Mammary epithelial cell (primary cell): ENCODE measurements at regions of chr10 and their contacts with region 1.

Region 1: GRCh38 chr10:129971381-129972144 is 7.5 kb upstream of the EBF3 start:
- DNase-seq: no peak
- H3K4me3 ChIP-seq: no peak overlapping the region
- H3K27ac ChIP-seq: no peak overlapping the region
- H3K4me1 ChIP-seq: no peaks in the 10 kb centered on the region
- H3K27me3 ChIP-seq: peaks cover 39% of the 10 kb centered on the region
- CTCF ChIP-seq: peak in 1 of 2 donors; percentile 37

Region 2: GRCh38 chr10:128211953-128212727 is 1759.4 kb before region 1 on chr10:
- CTCF ChIA-PET with region 1: no interaction called
- dilution Hi-C with region 1: no loop called
- in situ Hi-C with region 1: no loop called
- intact Hi-C with region 1: loop called (anchors 5 kb)
- DNase-seq: peak; percentile 60
- H3K4me3 ChIP-seq: no peak overlapping the region
- H3K27ac ChIP-seq: no peak overlapping the region
- H3K4me1 ChIP-seq: no peaks in the 10 kb centered on the region
- H3K27me3 ChIP-seq: no peaks in the 10 kb centered on the region
- CTCF ChIP-seq: peak; percentile 70 to 95

Region 3: GRCh38 chr10:129030996-129031843 is 940.3 kb before region 1 on chr10:
- CTCF ChIA-PET with region 1: no interaction called
- dilution Hi-C with region 1: no loop called
- in situ Hi-C with region 1: no loop called
- intact Hi-C with region 1: loop called (anchors 5 kb)
- DNase-seq: peak; percentile 1
- H3K4me3 ChIP-seq: no peak overlapping the region
- H3K27ac ChIP-seq: no peak overlapping the region
- H3K4me1 ChIP-seq: no peaks in the 10 kb centered on the region
- H3K27me3 ChIP-seq: no peaks in the 10 kb centered on the region
- CTCF ChIP-seq: peak; percentile 22 to 41

Region 4: GRCh38 chr10:129912166-129912917 is 59.2 kb before region 1 on chr10:
- CTCF ChIA-PET with region 1: no interaction called
- dilution Hi-C with region 1: no loop called
- in situ Hi-C with region 1: no loop called
- intact Hi-C with region 1: no loop called
- DNase-seq: no peak
- H3K4me3 ChIP-seq: no peak overlapping the region
- H3K27ac ChIP-seq: no peak overlapping the region
- H3K4me1 ChIP-seq: no peaks in the 10 kb centered on the region
- H3K27me3 ChIP-seq: no peaks in the 10 kb centered on the region
- CTCF ChIP-seq: no peak

Region 5: GRCh38 chr10:130110246-130111112 is 138.9 kb after region 1 on chr10 and contains the start of gene C10orf143:
- CTCF ChIA-PET with region 1: no interaction called
- dilution Hi-C with region 1: no loop called
- in situ Hi-C with region 1: no loop called
- intact Hi-C with region 1: loop called (anchors 5 kb)
- DNase-seq: peak; percentile 97
- H3K4me3 ChIP-seq: peak within 1 kb of the TSS; percentile 74 to 93 (median 84)
- H3K27ac ChIP-seq: peak within 1 kb of the TSS; percentile 94
- H3K4me1 ChIP-seq: peaks cover 11% of the 10 kb centered on the region
- H3K27me3 ChIP-seq: no peaks in the 10 kb centered on the region
- CTCF ChIP-seq: no peak
- total RNA-seq, gene C10orf143: 1.3 to 2.4 TPM

Region 6: GRCh38 chr10:130127364-130128061 is 155.9 kb after region 1 on chr10:
- CTCF ChIA-PET with region 1: interaction called, 3 read pairs
- dilution Hi-C with region 1: no loop called
- in situ Hi-C with region 1: no loop called
- intact Hi-C with region 1: loop called (anchors 5 kb)
- DNase-seq: peak; percentile 66
- H3K4me3 ChIP-seq: no peak overlapping the region
- H3K27ac ChIP-seq: no peak overlapping the region
- H3K4me1 ChIP-seq: no peaks in the 10 kb centered on the region
- H3K27me3 ChIP-seq: peaks cover 3% of the 10 kb centered on the region
- CTCF ChIP-seq: peak; percentile 93 to 94

Region 7: GRCh38 chr10:130875897-130876472 is 904.4 kb after region 1 on chr10:
- CTCF ChIA-PET with region 1: no interaction called
- dilution Hi-C with region 1: no loop called
- in situ Hi-C with region 1: no loop called
- intact Hi-C with region 1: no loop called
- DNase-seq: no peak
- H3K4me3 ChIP-seq: no peak overlapping the region
- H3K27ac ChIP-seq: no peak overlapping the region
- H3K4me1 ChIP-seq: no peaks in the 10 kb centered on the region
- H3K27me3 ChIP-seq: no peaks in the 10 kb centered on the region
- CTCF ChIP-seq: no peak